Psoas muscle (tissue), 8 donors: ENCODE measurements at regions of chr12 and their contacts with region 1.

Region 1: DNA sequence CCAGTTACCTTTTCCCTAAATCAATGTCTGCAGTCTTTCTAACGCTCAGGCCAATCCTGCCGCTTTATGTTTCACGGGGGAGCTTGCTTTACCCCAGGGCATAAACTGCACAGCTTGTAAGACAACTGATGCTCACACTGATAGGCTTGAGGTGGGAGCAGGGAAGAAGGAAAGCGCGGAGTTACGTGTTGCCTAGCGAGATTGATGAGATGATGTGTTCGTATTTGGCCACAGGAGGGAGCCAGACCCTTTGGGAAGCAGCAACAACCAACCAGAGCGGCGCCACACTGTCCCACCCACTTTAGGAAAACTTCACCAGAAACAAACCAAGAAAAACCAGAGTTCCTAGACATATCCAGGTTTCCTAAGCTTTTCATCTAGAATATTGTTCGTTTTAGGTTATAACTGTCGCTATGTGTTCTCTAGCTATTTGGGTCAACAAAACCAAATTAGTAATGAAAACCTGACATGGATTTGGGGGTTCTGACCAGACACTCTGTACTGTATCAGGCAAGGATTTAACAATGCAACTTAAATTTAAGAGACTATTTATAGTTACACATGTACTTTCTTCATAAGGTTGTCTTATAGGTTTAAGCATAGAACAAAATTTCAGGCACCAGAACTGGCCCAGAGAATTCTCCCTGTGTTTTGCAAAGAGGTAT is 2.4 kb downstream of the IL26 start:
- DNase-seq: peak; percentile 65 to 80
- ATAC-seq: peak; percentile 93 to 100 (median 98)
- H3K4me3 ChIP-seq: no peak overlapping the region
- H3K27ac ChIP-seq: no peak overlapping the region
- H3K4me1 ChIP-seq: no peaks in the 10 kb centered on the region
- H3K27me3 ChIP-seq: no peaks in the 10 kb centered on the region
- CTCF ChIP-seq: peak; percentile 81

Region 2: GRCh38 chr12:68317047-68317667 is 93.9 kb after region 1 on chr12:
- intact Hi-C with region 1: loop called (anchors 1 to 5 kb)
- DNase-seq: no peak
- ATAC-seq: peak in 1 of 4 donors; percentile 65
- H3K4me3 ChIP-seq: no peak overlapping the region
- H3K27ac ChIP-seq: no peak overlapping the region
- H3K4me1 ChIP-seq: peaks cover 4% of the 10 kb centered on the region
- H3K27me3 ChIP-seq: no peaks in the 10 kb centered on the region
- CTCF ChIP-seq: peak; percentile 72

Region 3: DNA sequence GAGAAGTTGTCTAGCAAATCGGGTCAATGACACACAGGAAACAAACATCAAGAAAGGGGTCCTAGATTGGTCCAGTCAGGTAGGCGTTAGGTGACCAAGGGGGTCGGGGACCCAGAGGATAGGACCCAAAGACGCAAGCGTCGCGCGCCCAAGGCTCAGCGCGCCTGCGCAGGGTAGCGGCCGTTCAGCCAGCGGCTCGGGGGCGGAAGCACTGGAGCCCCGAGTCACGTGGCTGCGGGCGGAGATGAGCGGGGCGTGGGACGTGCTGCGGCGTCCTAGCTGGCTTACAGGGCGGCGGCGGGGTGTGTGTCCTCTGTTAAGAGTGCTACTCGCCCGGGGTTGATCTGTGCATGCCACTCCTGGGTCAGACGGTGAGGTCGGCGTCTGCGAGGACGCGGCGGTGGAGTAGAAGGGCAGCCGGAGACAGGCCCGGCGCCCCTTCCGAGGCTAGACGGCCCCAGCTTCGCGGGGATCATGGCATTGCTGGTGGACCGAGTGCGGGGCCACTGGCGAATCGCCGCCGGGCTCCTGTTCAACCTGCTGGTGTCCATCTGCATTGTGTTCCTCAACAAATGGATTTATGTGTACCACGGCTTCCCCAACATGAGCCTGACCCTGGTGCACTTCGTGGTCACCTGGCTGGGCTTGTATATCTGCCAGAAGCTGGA is 522.8 kb after region 1 on chr12 and contains the start of gene SLC35E3:
- intact Hi-C with region 1: loop called in 1 of 2 experiments (anchors 10 kb)
- DNase-seq: peak; percentile 94 to 97
- ATAC-seq: peak; percentile 99 to 100 (median 100)
- H3K4me3 ChIP-seq: peak within 1 kb of the TSS; percentile 85
- H3K27ac ChIP-seq: peak within 1 kb of the TSS; percentile 76
- H3K4me1 ChIP-seq: peaks cover 17% of the 10 kb centered on the region
- H3K27me3 ChIP-seq: no peaks in the 10 kb centered on the region
- CTCF ChIP-seq: no peak
- total RNA-seq, gene SLC35E3: 4.2 to 7.5 (median 6.0) TPM